H1 (cell line): ENCODE measurements at regions of chr3 and their contacts with region 1.

Region 1: DNA sequence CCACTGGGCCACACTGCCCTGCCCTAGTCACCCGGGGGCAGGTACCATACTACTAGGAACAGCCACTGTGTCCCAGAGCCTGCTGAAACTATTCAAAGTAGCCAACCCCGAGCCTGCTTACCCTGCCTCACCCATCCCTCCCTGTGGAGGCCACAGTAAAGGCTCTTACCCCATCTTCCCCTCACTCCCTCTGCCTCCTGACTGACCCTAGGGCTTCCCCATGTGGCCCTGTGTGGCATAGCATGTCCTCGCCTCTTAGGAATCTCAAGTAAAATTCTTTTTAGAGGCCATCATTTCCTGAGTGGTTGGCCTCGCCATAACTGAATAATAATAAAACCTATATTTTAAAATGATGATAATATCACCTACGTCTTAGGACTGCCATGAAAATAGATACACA is 112.2 kb upstream of the SLC6A11 start:
- DNase-seq: peak; percentile 49 to 66
- H3K4me3 ChIP-seq: no peak overlapping the region
- H3K27ac ChIP-seq: no peak overlapping the region
- H3K4me1 ChIP-seq: peaks cover 2 to 10% (median 6%) of the 10 kb centered on the region in 4 experiments
- H3K27me3 ChIP-seq: peaks cover 8 to 39% (median 31%) of the 10 kb centered on the region in 4 experiments
- CTCF ChIP-seq: peak; percentile 78 to 87 (median 79)
- EP300 ChIP-seq: peak in 1 of 2 experiments; percentile 84; a peak in 1 of 3 replicates
- POLR2A ChIP-seq: no peak
- RAD21 ChIP-seq: peak; percentile 90 to 95

Region 2: GRCh38 chr3:10515884-10516495 is 187.9 kb before region 1 on chr3:
- CTCF ChIA-PET with region 1: interaction called, 13 read pairs
- POLR2A ChIA-PET with region 1: no interaction called
- DNase-seq: no peak
- H3K4me3 ChIP-seq: no peak overlapping the region
- H3K27ac ChIP-seq: no peak overlapping the region
- H3K4me1 ChIP-seq: peaks cover 0 to 5% (median 0%) of the 10 kb centered on the region in 4 experiments; a peak in 4 of 7 replicates
- H3K27me3 ChIP-seq: no peaks in the 10 kb centered on the region; a peak in 1 of 7 replicates
- CTCF ChIP-seq: peak; percentile 64 to 67 (median 64)
- EP300 ChIP-seq: no peak
- POLR2A ChIP-seq: no peak
- RAD21 ChIP-seq: peak; percentile 69 to 70

Region 3: DNA sequence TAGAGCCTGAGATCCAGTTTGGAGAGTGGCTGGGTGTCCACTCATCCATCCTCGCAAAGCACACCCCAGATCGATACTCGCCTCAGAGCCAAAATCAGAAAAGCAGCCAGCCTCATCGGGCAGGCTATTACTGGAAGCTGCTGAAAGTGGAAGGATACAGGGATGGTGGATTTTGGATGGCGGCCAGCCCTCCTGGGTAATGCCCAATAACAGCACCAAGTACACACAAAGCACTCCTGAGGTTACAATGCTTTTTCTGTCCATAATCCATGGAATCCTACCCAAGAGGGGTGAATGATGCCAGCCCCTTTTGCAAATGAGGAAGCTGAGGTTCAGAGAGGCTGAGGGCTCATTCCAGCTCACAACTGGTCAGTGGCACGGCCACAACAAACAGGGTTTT is 19.0 kb after region 1 on chr3:
- CTCF ChIA-PET with region 1: interaction called, 11 read pairs
- POLR2A ChIA-PET with region 1: interaction called, 3 read pairs
- DNase-seq: no peak
- H3K4me3 ChIP-seq: no peak overlapping the region
- H3K27ac ChIP-seq: no peak overlapping the region
- H3K4me1 ChIP-seq: 0 out of 7 replicates have a peak, but pooled peaks cover 0 to 2% (median 0%) of the 10 kb centered on the region in 4 experiments
- H3K27me3 ChIP-seq: no peaks in the 10 kb centered on the region
- CTCF ChIP-seq: no peak
- EP300 ChIP-seq: no peak
- POLR2A ChIP-seq: no peak
- RAD21 ChIP-seq: no peak

Region 4: GRCh38 chr3:11077466-11077865 is 373.6 kb after region 1 on chr3:
- CTCF ChIA-PET with region 1: no interaction called
- POLR2A ChIA-PET with region 1: no interaction called
- DNase-seq: no peak
- H3K4me3 ChIP-seq: no peak overlapping the region
- H3K27ac ChIP-seq: no peak overlapping the region
- H3K4me1 ChIP-seq: peaks cover 0 to 3% (median 0%) of the 10 kb centered on the region in 4 experiments; a peak in 1 of 7 replicates
- H3K27me3 ChIP-seq: no peaks in the 10 kb centered on the region
- CTCF ChIP-seq: no peak
- EP300 ChIP-seq: no peak
- POLR2A ChIP-seq: no peak
- RAD21 ChIP-seq: no peak